GM13977 (cell line): ENCODE measurements at regions of chr5 and their contacts with region 1.

Region 1: DNA sequence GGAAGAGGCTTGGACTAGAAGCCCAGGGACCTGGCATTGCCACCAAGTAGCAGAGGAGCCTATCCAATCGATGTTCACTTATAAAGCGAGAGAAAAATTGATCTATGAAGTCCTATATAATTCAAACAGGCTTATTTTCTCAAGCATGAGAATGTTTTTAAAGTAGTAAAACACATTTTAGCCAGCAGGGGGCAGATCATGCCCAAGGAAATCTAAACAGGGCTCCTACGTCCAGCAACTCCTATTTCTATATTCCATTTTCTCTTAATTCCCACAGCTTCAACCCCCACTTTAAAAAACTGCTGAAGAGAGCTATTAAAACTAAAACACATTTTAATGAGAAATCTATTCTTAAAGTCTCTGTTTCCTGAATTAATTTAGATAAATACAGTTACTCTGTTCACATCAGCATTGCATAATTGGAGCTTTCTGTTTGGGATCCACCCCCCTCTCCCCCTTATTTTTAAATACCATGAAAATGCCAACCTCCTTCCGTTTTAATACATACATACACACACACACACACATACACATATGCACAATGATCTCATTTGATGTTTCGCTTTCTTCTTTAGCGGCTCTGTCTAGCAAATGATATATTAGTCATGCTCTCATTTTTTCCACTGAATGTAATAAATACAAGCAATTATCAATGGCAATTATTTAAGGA is 144.9 kb downstream of the MYO10 start:
- DNase-seq: peak; percentile 66
- CTCF ChIP-seq: peak; percentile 64

Region 2: DNA sequence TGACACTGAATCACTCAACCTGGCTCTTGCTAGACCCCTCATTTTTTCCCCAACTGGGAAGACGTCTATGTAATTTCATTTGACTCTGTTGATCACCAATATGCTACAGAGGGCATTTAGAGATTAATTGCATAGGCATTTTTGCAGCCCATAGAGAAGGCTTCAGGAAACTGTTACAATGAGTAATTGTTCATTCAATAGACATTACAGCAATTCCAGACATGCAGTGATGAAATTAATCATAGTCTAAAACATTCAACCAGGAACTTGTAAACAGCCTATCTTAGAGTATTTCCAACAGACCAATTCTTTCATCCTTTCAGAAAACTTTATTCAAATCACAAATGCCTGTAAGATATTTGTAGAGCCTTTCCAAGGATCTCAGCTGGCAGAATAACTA is 733.9 kb before region 1 on chr5:
- in situ Hi-C with region 1: no loop called
- DNase-seq: no peak
- CTCF ChIP-seq: no peak

Region 3: DNA sequence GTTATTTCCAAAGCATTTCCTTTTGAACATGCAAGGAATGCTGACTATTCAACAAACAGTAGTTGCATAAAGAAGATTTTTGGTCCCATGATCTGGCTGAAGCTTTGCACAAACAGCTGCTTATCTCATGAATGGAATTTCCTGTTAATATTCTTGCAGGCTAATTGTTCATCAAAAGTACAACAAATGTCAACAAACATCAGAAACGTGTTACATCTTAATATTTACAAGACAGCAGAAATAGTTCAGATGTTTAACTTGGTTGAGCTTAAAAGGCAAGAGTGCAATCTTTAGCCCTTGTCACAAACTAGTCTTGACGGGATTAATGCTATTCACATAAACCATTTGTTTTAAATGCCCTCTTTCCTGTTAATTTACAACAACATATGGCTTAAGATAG is 378.3 kb after region 1 on chr5:
- in situ Hi-C with region 1: no loop called
- DNase-seq: no peak
- CTCF ChIP-seq: no peak

Region 4: DNA sequence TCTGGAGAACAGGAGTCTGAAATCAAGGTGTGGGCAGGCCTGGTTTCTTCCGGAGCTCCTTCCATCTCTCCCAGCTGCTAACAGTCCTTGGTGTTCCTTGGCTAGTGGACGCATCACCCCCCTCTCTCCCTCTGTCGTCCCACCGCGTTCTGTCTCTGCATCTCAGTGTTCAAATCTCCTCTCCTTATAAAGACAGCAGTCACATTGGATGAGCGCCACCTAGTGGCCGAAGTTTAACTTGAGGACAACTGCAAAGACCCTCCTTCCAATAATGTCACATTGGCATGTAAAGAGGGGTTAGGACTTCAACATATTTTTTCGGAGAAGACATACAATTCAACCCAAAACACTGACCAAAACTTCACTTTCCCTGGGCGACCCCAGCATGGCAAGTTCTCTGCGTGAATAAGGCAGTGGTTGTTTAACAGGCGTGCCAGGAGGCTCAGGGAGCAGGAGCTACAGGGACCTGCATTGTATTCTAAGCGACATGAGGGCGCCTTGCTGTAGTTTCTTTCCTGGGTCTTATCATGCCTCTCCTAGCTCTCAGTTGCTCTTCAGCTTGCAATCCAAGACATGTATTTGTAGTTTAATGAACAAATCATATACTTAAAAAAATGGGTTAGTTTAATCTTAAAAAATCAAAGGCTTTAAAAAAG is 398.3 kb after region 1 on chr5:
- in situ Hi-C with region 1: loop called (anchors 25 kb)
- DNase-seq: peak; percentile 43
- CTCF ChIP-seq: peak; percentile 84